ENCODE measurements at regions of chrX and their contacts with region 1.

Region 1: GRCh38 chrX:68146054-68146453 is 287.2 kb downstream of the OPHN1 start:
- DNase-seq: peak; percentile 17
- H3K4me3 Mint-ChIP-seq: no peak overlapping the region
- H3K27ac Mint-ChIP-seq: no peak overlapping the region
- H3K4me1 Mint-ChIP-seq: peaks cover 7% of the 10 kb centered on the region
- H3K27me3 Mint-ChIP-seq: no peaks in the 10 kb centered on the region
- CTCF ChIP-seq: peak; percentile 18

Region 2: GRCh38 chrX:67555578-67556203 is 590.4 kb before region 1 on chrX:
- CTCF ChIA-PET with region 1: no interaction called
- intact Hi-C with region 1: loop called (anchors 5 kb)
- DNase-seq: peak; percentile 41
- H3K4me3 Mint-ChIP-seq: no peak overlapping the region
- H3K27ac Mint-ChIP-seq: no peak overlapping the region
- H3K4me1 Mint-ChIP-seq: no peaks in the 10 kb centered on the region
- H3K27me3 Mint-ChIP-seq: no peaks in the 10 kb centered on the region
- CTCF ChIP-seq: peak; percentile 53

Region 3: DNA sequence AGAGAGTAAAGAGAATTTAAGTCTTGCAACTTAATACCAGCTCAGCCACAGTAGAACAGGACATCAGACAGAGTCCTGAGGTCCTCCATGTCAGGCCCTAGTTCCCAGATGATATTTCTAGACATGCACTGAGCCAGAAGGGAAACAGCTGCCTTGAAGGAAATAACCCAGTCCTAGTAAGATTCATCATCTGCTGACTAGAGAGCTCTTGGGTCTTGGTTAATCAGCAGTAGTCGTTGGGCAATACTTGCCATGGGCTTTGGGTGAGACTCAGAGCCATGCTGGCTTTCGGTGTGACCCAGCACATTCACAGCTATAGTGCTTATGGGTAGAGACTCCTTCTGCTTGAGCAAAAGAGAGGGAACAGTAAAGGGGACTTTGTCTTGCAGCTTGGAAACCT is 223.1 kb before region 1 on chrX:
- CTCF ChIA-PET with region 1: no interaction called
- intact Hi-C with region 1: no loop called
- DNase-seq: no peak
- H3K4me3 Mint-ChIP-seq: no peak overlapping the region
- H3K27ac Mint-ChIP-seq: no peak overlapping the region
- H3K4me1 Mint-ChIP-seq: no peaks in the 10 kb centered on the region
- H3K27me3 Mint-ChIP-seq: no peaks in the 10 kb centered on the region
- CTCF ChIP-seq: no peak

Region 4: GRCh38 chrX:68018681-68019111 is 127.4 kb before region 1 on chrX:
- CTCF ChIA-PET with region 1: no interaction called
- intact Hi-C with region 1: loop called (anchors 2 kb)
- DNase-seq: peak; percentile 30
- H3K4me3 Mint-ChIP-seq: no peak overlapping the region
- H3K27ac Mint-ChIP-seq: no peak overlapping the region
- H3K4me1 Mint-ChIP-seq: no peaks in the 10 kb centered on the region
- H3K27me3 Mint-ChIP-seq: no peaks in the 10 kb centered on the region
- CTCF ChIP-seq: peak; percentile 25

Region 5: GRCh38 chrX:68045008-68045577 is 101.0 kb before region 1 on chrX:
- CTCF ChIA-PET with region 1: interaction called, 3 read pairs
- intact Hi-C with region 1: loop called (anchors 10 kb)
- DNase-seq: no peak
- H3K4me3 Mint-ChIP-seq: no peak overlapping the region
- H3K27ac Mint-ChIP-seq: no peak overlapping the region
- H3K4me1 Mint-ChIP-seq: no peaks in the 10 kb centered on the region
- H3K27me3 Mint-ChIP-seq: no peaks in the 10 kb centered on the region
- CTCF ChIP-seq: no peak